K562 (cell line): ENCODE measurements at regions of chr11 and their contacts with region 1.

Region 1: DNA sequence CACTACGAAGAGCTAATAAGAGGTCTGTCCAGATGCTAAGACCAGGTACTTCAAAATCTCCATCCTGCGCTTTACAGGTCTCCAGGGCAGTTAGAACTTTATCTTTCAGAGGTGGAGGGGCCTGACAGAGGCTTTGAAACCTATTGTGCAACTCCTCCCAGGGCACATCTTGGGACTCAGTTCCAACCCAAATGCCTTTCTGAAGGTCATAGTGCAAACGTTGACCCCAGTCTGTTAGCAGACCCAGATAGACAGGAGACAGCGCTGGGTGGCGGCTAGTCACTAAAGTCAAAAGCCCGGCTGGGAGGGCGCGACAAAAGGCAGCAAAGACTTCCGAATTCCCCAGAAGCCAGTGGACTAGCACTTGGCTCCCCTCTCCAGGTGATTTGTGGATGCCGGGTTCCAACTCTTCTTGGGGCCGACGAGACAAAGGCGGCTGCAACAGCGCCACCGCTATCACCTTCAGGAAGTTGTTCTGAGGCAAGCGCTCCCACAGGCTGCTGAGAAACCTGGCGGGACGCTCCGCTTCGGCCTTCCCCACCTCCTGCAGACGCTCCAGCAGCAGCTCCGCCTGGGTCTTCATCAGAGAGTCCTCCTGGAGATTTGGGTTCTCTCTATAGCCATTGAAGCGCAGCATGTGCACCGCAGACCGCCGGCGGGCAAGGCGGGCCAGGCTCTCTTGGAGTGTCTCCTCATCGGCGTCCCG is 728 bp downstream of the FANCF start:
- DNase-seq: peak; percentile 30 to 83 (median 41)
- ATAC-seq: peak; percentile 87
- H3K4me3 ChIP-seq: peak overlapping the region; percentile 75
- H3K27ac ChIP-seq: peak overlapping the region; percentile 83
- H3K4me1 ChIP-seq: peaks cover 0 to 8% of the 10 kb centered on the region in 2 experiments; a peak in 1 of 5 replicates
- H3K27me3 ChIP-seq: no peaks in the 10 kb centered on the region
- CTCF ChIP-seq: peak; percentile 58 to 79 (median 68)
- EP300 ChIP-seq: no peak
- POLR2A ChIP-seq: no peak
- RAD21 ChIP-seq: peak in 1 of 2 experiments; percentile 31; a peak in 1 of 4 replicates

Region 2: GRCh38 chr11:22699388-22699787 is 74.5 kb after region 1 on chr11:
- CTCF ChIA-PET with region 1: no interaction called
- POLR2A ChIA-PET with region 1: no interaction called
- in situ Hi-C with region 1: no loop called
- intact Hi-C with region 1: no loop called
- DNase-seq: no peak
- ATAC-seq: no peak
- H3K4me3 ChIP-seq: no peak overlapping the region
- H3K27ac ChIP-seq: no peak overlapping the region
- H3K4me1 ChIP-seq: no peaks in the 10 kb centered on the region
- H3K27me3 ChIP-seq: no peaks in the 10 kb centered on the region
- CTCF ChIP-seq: no peak
- EP300 ChIP-seq: no peak
- POLR2A ChIP-seq: no peak
- RAD21 ChIP-seq: no peak

Region 3: DNA sequence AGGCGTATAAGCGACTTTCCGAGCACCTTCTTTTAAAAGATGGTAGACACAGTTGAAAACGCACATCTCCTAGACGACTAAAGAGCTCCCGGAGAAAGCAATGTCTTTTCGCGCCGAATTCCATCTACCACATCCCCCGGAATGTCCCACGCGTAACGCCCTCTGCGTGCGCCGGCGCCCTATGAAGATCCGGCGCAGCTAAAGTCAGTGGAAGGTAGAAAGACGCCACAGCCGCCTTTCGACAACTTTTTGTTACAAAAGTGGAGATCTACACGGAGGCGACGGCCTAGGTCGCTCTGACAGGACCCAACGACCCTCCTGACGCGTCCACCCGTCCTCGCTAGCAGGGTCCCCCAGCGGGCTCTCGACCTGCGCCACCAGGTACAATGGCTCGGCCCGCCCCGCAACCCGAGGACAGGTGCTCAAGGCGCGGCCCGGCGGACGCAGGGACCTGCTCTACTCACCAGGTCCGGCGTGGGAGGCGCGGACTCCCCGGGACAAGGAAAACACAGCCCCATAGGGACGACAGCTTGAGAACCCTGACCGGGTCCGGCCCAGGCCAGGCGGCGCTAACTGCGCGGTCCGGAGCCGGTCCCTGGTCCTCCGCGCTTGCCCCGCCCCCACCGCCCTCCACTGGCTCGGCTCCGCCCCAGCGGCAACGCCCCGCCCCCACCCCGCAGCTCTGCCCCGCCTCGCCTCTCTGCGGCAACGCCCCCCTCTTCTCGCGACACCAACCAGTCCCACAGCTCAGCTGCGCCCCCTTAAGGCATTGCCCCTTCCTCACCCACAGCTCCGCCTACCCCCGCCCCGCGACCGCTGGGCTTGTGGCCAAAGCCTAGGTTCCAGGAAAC is 204.6 kb after region 1 on chr11 and contains the start of gene SVIP:
- CTCF ChIA-PET with region 1: no interaction called
- POLR2A ChIA-PET with region 1: no interaction called
- in situ Hi-C with region 1: no loop called
- intact Hi-C with region 1: loop called (anchors 5 kb)
- DNase-seq: peak; percentile 92 to 96 (median 96)
- ATAC-seq: peak; percentile 96
- H3K4me3 ChIP-seq: peak within 1 kb of the TSS; percentile 80
- H3K27ac ChIP-seq: peak within 1 kb of the TSS; percentile 85
- H3K4me1 ChIP-seq: peaks cover 0 to 7% of the 10 kb centered on the region in 2 experiments; a peak in 2 of 5 replicates
- H3K27me3 ChIP-seq: no peaks in the 10 kb centered on the region
- CTCF ChIP-seq: peak; percentile 71 to 90 (median 86)
- EP300 ChIP-seq: no peak
- POLR2A ChIP-seq: peak; percentile 84
- RAD21 ChIP-seq: peak in 1 of 2 experiments; percentile 45; a peak in 2 of 4 replicates
- polyA plus RNA-seq, gene SVIP: 47.5 to 62.5 TPM